ENCODE measurements at regions of chr6 and their contacts with region 1.

Region 1: DNA sequence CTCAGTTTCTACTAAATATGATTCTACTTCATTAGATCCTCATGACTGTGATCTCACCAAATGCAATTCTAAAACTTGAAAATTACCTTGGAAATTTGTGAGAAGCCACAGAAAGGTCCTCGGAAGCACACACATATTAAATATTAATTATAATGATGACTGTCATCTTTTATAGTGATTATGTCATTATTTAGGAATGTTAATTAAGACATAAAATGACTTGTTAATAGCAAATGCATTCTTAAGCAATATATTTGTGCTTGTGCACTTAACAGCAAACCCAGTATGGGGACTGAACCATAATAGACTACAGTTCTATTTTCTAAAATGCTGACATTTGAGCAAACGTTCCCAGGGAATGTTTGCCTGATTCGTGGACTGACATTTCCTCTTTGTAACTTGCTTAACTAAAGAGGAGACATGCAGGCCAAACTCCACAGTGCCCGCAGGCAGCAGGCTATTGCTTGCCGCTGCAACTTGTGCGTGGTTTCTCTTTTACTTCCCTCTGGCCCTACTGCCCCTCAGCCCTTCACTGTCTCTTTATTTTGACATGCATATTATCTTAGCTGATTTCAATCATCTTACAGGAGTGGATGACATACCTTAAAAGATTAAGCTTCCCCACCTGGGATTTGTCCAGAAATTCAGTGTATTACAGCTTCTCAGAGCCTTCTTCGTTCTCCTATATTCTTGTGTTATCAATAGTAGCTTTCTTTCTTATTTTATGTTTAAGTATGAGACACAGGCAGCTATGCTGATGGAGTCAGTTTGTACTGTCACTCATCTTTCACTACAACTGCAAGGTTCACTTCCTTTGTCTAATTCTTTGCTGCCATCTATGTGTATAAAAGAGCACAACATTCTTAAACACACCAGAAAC is 141.5 kb downstream of the GMDS start:
- DNase-seq: peak; percentile 58
- H3K4me3 ChIP-seq: peak overlapping the region; percentile 24 to 44; a peak in 2 of 4 replicates
- H3K27ac ChIP-seq: peak overlapping the region; percentile 28 to 43; a peak in 2 of 4 replicates
- H3K4me1 ChIP-seq: peaks cover 7 to 13% of the 10 kb centered on the region in 2 experiments; a peak in 2 of 4 replicates
- H3K27me3 ChIP-seq: no peaks in the 10 kb centered on the region
- CTCF ChIP-seq: peak; percentile 77
- EP300 ChIP-seq: no peak
- RAD21 ChIP-seq: peak; percentile 97

Region 2: GRCh38 chr6:1604158-1605030 is 499.5 kb before region 1 on chr6:
- CTCF ChIA-PET with region 1: interaction called, 60 read pairs
- POLR2A ChIA-PET with region 1: no interaction called
- DNase-seq: peak; percentile 94
- H3K4me3 ChIP-seq: peak overlapping the region; percentile 40 to 51
- H3K27ac ChIP-seq: no peak overlapping the region
- H3K4me1 ChIP-seq: peaks cover 0 to 11% of the 10 kb centered on the region in 2 experiments; a peak in 1 of 4 replicates
- H3K27me3 ChIP-seq: no peaks in the 10 kb centered on the region
- CTCF ChIP-seq: peak; percentile 80
- EP300 ChIP-seq: no peak
- RAD21 ChIP-seq: peak; percentile 92

Region 3: DNA sequence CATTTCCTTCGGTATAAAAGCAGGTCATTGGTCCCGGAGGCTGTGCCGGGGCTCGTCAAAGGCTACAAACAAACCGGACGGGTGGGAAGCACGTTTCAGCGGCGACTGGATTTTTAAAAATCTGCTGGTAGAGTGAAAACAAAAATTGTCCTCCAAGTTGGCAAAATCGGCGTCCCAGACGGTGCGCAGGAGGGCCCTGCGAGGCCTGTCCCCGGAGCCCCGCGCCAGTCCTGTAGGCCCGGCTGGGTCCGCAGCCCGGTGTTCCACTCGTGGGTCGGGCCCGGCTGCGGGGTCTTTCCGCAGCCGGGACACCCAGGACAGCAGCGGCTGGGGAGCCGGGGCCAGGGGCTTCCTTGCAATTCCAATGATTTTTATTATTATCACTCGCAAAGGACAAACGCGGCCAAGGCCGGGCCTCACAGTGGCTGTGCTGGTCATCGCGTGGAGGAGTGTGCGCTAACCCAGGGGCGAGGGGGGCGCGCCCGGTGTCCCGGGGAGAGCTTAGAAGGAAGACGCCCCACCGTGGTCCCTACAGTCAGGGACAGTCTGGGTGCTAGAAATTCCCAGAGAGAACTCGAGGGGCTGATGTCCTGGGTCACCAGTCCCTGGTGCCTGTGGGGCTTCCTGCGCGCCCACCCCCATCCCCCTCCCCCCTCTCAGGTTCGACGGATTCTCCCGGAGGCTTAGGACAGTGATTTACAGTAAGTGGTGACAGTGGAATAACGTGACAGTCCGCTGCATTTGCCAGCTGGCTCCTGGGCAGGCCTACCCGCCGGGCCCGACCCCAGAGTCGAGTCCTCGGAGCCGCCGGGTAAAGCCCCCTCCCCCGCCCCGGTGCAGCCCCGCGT is 484.8 kb before region 1 on chr6:
- CTCF ChIA-PET with region 1: interaction called, 10 read pairs
- POLR2A ChIA-PET with region 1: no interaction called
- DNase-seq: no peak
- H3K4me3 ChIP-seq: no peak overlapping the region
- H3K27ac ChIP-seq: no peak overlapping the region
- H3K4me1 ChIP-seq: peaks cover 0 to 11% of the 10 kb centered on the region in 2 experiments; a peak in 2 of 4 replicates
- H3K27me3 ChIP-seq: no peaks in the 10 kb centered on the region
- CTCF ChIP-seq: no peak
- EP300 ChIP-seq: no peak
- RAD21 ChIP-seq: no peak

Region 4: GRCh38 chr6:1855890-1856289 is 248.0 kb before region 1 on chr6:
- CTCF ChIA-PET with region 1: interaction called, 15 read pairs
- POLR2A ChIA-PET with region 1: no interaction called
- DNase-seq: no peak
- H3K4me3 ChIP-seq: no peak overlapping the region
- H3K27ac ChIP-seq: peak overlapping the region in 1 of 2 experiments; percentile 68; a peak in 1 of 4 replicates
- H3K4me1 ChIP-seq: peaks cover 10 to 37% of the 10 kb centered on the region in 2 experiments; a peak in 3 of 4 replicates
- H3K27me3 ChIP-seq: no peaks in the 10 kb centered on the region
- CTCF ChIP-seq: no peak
- EP300 ChIP-seq: no peak
- RAD21 ChIP-seq: peak; percentile 22; the same call in 1 of the 2 replicates

Region 5: DNA sequence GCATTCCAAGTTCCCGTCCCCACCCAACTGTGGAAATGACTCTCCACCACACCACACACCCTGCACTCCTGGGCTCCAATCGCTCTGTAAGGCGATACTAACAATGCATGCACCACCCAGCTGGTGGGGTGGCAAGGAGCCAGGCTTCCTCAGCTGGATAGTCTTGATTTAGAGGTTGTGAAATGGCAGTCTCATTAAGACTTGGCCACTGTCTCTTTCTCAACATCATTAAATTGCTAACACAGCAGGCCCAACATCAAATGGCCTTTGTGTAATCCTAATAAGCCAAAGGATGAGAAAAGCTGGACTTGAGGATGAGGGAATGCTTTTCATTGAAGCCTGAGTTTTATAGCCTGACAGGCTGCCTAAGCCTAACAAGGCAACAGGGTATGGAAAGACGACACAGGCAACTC is 82.2 kb before region 1 on chr6:
- CTCF ChIA-PET with region 1: no interaction called
- POLR2A ChIA-PET with region 1: no interaction called
- DNase-seq: no peak
- H3K4me3 ChIP-seq: no peak overlapping the region
- H3K27ac ChIP-seq: peak overlapping the region in 1 of 2 experiments; percentile 54; a peak in 1 of 4 replicates
- H3K4me1 ChIP-seq: peaks cover 10 to 18% of the 10 kb centered on the region in 2 experiments; a peak in 3 of 4 replicates
- H3K27me3 ChIP-seq: no peaks in the 10 kb centered on the region
- CTCF ChIP-seq: no peak
- EP300 ChIP-seq: 0 out of 4 replicates have a peak, but pooled peaks of 1 of the 2 experiments have one; percentile 13
- RAD21 ChIP-seq: no peak

Region 6: GRCh38 chr6:2196079-2196679 is 92.3 kb after region 1 on chr6:
- CTCF ChIA-PET with region 1: interaction called, 10 read pairs
- POLR2A ChIA-PET with region 1: no interaction called
- DNase-seq: peak; percentile 57
- H3K4me3 ChIP-seq: no peak overlapping the region
- H3K27ac ChIP-seq: peak overlapping the region in 1 of 2 experiments; percentile 22; a peak in 1 of 4 replicates
- H3K4me1 ChIP-seq: peaks cover 8 to 13% of the 10 kb centered on the region in 2 experiments
- H3K27me3 ChIP-seq: no peaks in the 10 kb centered on the region
- CTCF ChIP-seq: peak; percentile 82
- EP300 ChIP-seq: no peak
- RAD21 ChIP-seq: peak; percentile 86

Region 7: DNA sequence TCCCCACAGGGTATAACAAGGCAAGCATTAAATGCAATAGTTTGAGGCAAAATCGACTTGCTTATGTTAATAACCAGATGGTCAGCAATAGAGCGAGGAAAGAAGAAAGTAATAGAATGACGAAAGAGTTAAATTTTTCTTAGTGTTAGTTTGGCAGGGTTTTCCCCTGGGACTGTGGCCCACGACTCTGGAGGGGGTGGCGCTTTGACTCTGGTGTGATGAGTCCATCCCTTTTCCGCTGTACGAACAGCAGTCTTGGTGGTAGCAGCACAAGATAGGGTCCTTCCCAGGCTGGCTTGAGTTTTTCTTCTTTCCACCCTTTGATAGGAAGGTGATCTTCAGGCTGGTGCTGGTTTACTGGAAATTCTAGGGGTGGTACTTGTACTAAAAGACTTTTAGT is 210.8 kb after region 1 on chr6:
- CTCF ChIA-PET with region 1: no interaction called
- POLR2A ChIA-PET with region 1: no interaction called
- DNase-seq: no peak
- H3K4me3 ChIP-seq: no peak overlapping the region
- H3K27ac ChIP-seq: no peak overlapping the region
- H3K4me1 ChIP-seq: no peaks in the 10 kb centered on the region
- H3K27me3 ChIP-seq: no peaks in the 10 kb centered on the region
- CTCF ChIP-seq: no peak
- EP300 ChIP-seq: no peak
- RAD21 ChIP-seq: no peak